AG04450 (cell line): ENCODE measurements at regions of chrX and their contacts with region 1.

Region 1: GRCh38 chrX:101759000-101759399 is 99.3 kb upstream of the ARMCX2 start:
- DNase-seq: peak; percentile 1
- H3K4me3 ChIP-seq: no peak overlapping the region
- H3K27ac ChIP-seq: no peak overlapping the region
- H3K27me3 ChIP-seq: no peaks in the 10 kb centered on the region
- CTCF ChIP-seq: peak; percentile 47

Region 2: DNA sequence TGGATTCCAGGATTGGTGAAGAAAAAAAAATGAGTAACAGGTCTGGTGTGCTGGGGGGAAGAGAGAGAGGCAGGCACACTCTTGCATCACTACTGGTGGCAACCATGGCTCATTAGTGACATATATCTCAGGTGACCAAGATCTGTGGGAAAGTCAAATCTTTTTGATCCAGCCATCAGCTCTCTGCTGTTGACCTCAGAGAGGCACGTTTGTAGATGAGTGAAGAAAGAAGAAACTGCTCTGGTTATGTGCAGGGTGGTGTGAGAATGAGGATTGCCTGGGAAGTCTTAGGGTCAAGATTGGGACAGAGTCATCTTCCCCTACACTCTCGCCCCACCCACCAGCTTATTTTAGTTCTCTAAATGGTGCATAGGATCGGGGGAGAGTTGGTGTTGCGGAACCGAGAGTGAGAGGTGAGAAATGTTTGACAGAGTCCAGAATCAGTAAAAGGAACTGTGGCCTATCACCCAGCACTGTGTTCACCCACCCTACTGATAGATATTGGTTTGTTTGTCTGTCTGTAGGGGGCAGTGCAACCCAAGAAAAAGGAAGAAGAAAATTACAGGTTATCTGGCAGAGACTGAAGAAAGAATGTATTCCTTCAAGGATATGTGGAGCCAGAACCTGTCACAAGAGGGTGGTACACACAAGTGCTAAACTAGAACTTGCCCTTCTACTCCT is 163.1 kb before region 1 on chrX:
- CTCF ChIA-PET with region 1: interaction called, 13 read pairs
- POLR2A ChIA-PET with region 1: no interaction called
- DNase-seq: peak; percentile 46
- H3K4me3 ChIP-seq: no peak overlapping the region
- H3K27ac ChIP-seq: no peak overlapping the region
- H3K27me3 ChIP-seq: peaks cover 6% of the 10 kb centered on the region
- CTCF ChIP-seq: peak; percentile 63

Region 3: GRCh38 chrX:101744085-101744484 is 14.9 kb before region 1 on chrX:
- CTCF ChIA-PET with region 1: no interaction called
- POLR2A ChIA-PET with region 1: no interaction called
- DNase-seq: no peak
- H3K4me3 ChIP-seq: no peak overlapping the region
- H3K27ac ChIP-seq: no peak overlapping the region
- H3K27me3 ChIP-seq: no peaks in the 10 kb centered on the region
- CTCF ChIP-seq: no peak